Common myeloid progenitor, CD34-positive (primary cell): ENCODE measurements at regions of chr3 and their contacts with region 1.

Region 1: DNA sequence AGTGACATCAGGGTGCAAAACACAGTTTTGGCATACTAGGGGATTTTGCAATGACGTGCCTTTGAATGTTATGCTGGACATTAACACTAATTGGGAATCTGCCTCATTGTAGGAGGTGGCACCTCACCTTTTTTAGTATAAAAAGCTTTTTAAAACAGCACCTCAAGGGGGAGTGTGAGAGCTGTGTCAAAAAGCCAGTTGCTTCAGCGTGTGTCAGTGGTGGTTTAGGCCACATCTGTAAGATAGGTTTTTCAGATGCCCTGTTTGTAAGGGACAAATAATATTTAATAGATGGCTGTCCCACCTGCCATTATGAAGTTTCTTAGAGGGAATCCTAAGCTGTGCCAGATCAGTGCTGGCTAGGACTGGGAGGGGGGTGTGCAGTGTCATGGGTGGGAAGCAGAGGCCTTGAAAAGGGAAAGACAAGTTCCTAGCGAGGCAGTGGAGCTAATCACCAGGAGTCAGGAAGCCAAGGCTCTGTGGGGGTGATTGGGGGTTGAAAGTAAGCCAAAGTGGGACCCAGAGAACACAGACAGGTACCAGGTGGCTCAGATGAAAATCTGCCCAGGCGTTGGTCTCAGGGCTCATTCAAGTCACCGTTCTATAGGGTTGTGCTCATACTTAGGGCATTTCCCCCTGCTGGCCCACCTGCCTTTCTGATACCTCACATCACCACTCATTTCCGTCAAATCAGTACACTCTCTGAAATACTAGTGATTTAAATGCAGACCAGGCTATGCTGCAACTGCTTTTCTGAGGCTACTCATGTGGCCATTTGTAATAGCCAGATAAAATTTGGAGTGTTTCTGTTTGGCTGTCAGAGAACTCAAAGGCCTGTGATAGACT is 120.5 kb downstream of the BBX start:
- DNase-seq: peak in 2 of 3 donors; percentile 36 to 42
- H3K4me3 ChIP-seq: no peak overlapping the region
- H3K27ac ChIP-seq: no peak overlapping the region
- H3K4me1 ChIP-seq: peaks cover 0 to 2% (median 0%) of the 10 kb centered on the region in 4 experiments
- H3K27me3 ChIP-seq: no peaks in the 10 kb centered on the region

Region 2: GRCh38 chr3:107627962-107628542 is 15.2 kb before region 1 on chr3:
- CTCF ChIA-PET with region 1: interaction called, 18 read pairs
- POLR2A ChIA-PET with region 1: no interaction called
- DNase-seq: peak in 2 of 3 donors; percentile 39 to 47
- H3K4me3 ChIP-seq: no peak overlapping the region
- H3K27ac ChIP-seq: no peak overlapping the region
- H3K4me1 ChIP-seq: peaks cover 11 to 28% (median 16%) of the 10 kb centered on the region in 4 experiments
- H3K27me3 ChIP-seq: no peaks in the 10 kb centered on the region